ENCODE measurements at regions of chr1 and their contacts with region 1.

Region 1: DNA sequence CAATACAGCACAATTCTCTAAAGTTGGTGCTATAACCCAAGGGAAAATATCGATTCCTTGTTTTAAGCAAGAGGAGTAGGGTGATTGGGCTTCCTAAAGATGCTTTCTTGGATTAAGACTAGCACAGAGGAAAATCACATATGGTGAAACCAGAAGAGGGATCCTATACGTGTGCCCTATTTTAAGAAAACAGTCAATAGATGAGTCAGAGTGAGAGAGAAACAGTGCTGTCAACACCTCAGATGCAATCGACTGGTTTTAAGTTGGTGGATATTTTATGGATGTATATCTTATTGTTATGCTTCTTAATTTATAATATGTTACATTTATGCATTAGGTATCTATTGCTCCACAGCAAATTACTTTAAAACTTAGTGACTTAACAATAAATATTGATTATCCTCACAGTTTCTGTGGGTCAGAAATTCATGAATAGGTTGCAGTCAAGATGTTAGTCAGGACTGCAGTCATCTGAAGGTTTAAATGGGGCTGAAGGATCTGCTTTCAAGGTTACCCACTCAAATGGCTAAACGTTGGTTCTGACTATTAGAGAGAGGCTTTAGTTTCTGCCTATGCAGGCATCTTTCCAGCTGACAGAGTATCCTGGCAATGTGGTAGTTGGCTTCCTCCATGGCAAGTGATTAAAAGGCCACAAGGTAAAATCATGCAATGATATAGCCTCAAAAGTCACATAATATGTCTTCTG is 61.6 kb upstream of the DEPDC1 start:
- DNase-seq: no peak
- ATAC-seq: no peak
- H3K4me3 Mint-ChIP-seq: no peak overlapping the region
- H3K27ac Mint-ChIP-seq: no peak overlapping the region
- H3K4me1 Mint-ChIP-seq: no peaks in the 10 kb centered on the region
- H3K27me3 Mint-ChIP-seq: no peaks in the 10 kb centered on the region

Region 2: DNA sequence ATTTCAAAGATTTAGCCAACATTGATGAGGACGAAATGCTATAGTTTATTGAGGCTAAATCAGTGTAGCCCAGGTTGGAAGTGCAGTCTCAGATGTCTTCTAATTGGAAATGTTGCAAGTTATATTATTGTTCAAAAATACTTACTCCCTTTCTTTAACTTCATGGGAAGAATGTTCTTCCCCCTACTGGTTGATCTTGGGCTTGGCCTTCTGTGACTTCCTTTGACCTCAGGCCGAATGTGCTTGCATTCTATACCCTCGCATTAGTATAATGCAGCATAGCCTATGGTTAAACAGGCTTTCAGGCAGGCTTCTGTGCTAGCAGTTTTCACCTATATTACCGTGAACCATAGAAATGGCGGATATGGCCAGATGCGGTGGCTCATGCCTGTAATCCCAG is 186.0 kb before region 1 on chr1:
- CTCF ChIA-PET with region 1: no interaction called
- POLR2A ChIA-PET with region 1: interaction called, 10 read pairs
- DNase-seq: no peak
- ATAC-seq: no peak
- H3K4me3 Mint-ChIP-seq: no peak overlapping the region
- H3K27ac Mint-ChIP-seq: no peak overlapping the region
- H3K4me1 Mint-ChIP-seq: no peaks in the 10 kb centered on the region
- H3K27me3 Mint-ChIP-seq: no peaks in the 10 kb centered on the region

Region 3: GRCh38 chr1:68454534-68454933 is 103.9 kb before region 1 on chr1:
- CTCF ChIA-PET with region 1: no interaction called
- POLR2A ChIA-PET with region 1: no interaction called
- DNase-seq: no peak
- ATAC-seq: no peak
- H3K4me3 Mint-ChIP-seq: no peak overlapping the region
- H3K27ac Mint-ChIP-seq: no peak overlapping the region
- H3K4me1 Mint-ChIP-seq: no peaks in the 10 kb centered on the region
- H3K27me3 Mint-ChIP-seq: peaks cover 2% of the 10 kb centered on the region

Region 4: GRCh38 chr1:68571454-68572235 is 13.2 kb after region 1 on chr1:
- CTCF ChIA-PET with region 1: no interaction called
- POLR2A ChIA-PET with region 1: no interaction called
- DNase-seq: no peak
- ATAC-seq: no peak
- H3K4me3 Mint-ChIP-seq: no peak overlapping the region
- H3K27ac Mint-ChIP-seq: no peak overlapping the region
- H3K4me1 Mint-ChIP-seq: no peaks in the 10 kb centered on the region
- H3K27me3 Mint-ChIP-seq: no peaks in the 10 kb centered on the region

Region 5: GRCh38 chr1:68615312-68615711 is 56.8 kb after region 1 on chr1:
- CTCF ChIA-PET with region 1: no interaction called
- POLR2A ChIA-PET with region 1: no interaction called
- DNase-seq: no peak
- ATAC-seq: no peak
- H3K4me3 Mint-ChIP-seq: no peak overlapping the region
- H3K27ac Mint-ChIP-seq: no peak overlapping the region
- H3K4me1 Mint-ChIP-seq: no peaks in the 10 kb centered on the region
- H3K27me3 Mint-ChIP-seq: no peaks in the 10 kb centered on the region

Measured in activated CD8-positive, alpha-beta T cell treated with anti-CD3 and anti-CD28 coated beads, Interleukin-2, amount 10 ng/mL, durations not matched to agents 7 days and 5 days (primary cell).